HCT116 (cell line): ENCODE measurements at regions of chr6 and their contacts with region 1.

Region 1: GRCh38 chr6:28725890-28726348 is 197.9 kb downstream of the TRIM27 start:
- DNase-seq: no peak
- ATAC-seq: peak; percentile 71
- H3K4me3 ChIP-seq: peak overlapping the region; percentile 28 to 36
- H3K27ac ChIP-seq: no peak overlapping the region
- H3K4me1 ChIP-seq: peaks cover 15 to 31% of the 10 kb centered on the region in 2 experiments; a peak in 3 of 4 replicates
- H3K27me3 ChIP-seq: no peaks in the 10 kb centered on the region
- CTCF ChIP-seq: no peak
- POLR2A ChIP-seq: no peak
- RAD21 ChIP-seq: no peak

Region 2: GRCh38 chr6:27237089-27237803 is 1488.7 kb before region 1 on chr6:
- CTCF ChIA-PET with region 1: no interaction called
- POLR2A ChIA-PET with region 1: no interaction called
- RAD21 ChIA-PET with region 1: no interaction called
- intact Hi-C with region 1: loop called (anchors 10 kb)
- DNase-seq: peak; percentile 67
- ATAC-seq: peak; percentile 86
- H3K4me3 ChIP-seq: no peak overlapping the region
- H3K27ac ChIP-seq: peak overlapping the region; percentile 6; the same call in 1 of the 2 replicates
- H3K4me1 ChIP-seq: peaks cover 8 to 23% of the 10 kb centered on the region in 2 experiments; a peak in 3 of 4 replicates
- H3K27me3 ChIP-seq: no peaks in the 10 kb centered on the region
- CTCF ChIP-seq: no peak
- POLR2A ChIP-seq: no peak
- RAD21 ChIP-seq: no peak

Region 3: GRCh38 chr6:28606424-28607400 is 119.2 kb before region 1 on chr6:
- CTCF ChIA-PET with region 1: no interaction called
- POLR2A ChIA-PET with region 1: no interaction called
- RAD21 ChIA-PET with region 1: no interaction called
- intact Hi-C with region 1: loop called (anchors 5 kb)
- DNase-seq: peak; percentile 87
- ATAC-seq: peak; percentile 88
- H3K4me3 ChIP-seq: peak overlapping the region; percentile 40 to 53
- H3K27ac ChIP-seq: peak overlapping the region; percentile 46
- H3K4me1 ChIP-seq: peaks cover 11 to 39% of the 10 kb centered on the region in 2 experiments; a peak in 3 of 4 replicates
- H3K27me3 ChIP-seq: no peaks in the 10 kb centered on the region
- CTCF ChIP-seq: peak in 2 of 3 experiments; percentile 58 to 59; a peak in 4 of 6 replicates
- POLR2A ChIP-seq: no peak
- RAD21 ChIP-seq: no peak

Region 4: GRCh38 chr6:28789553-28790083 is 63.7 kb after region 1 on chr6:
- CTCF ChIA-PET with region 1: no interaction called
- POLR2A ChIA-PET with region 1: no interaction called
- RAD21 ChIA-PET with region 1: no interaction called
- intact Hi-C with region 1: loop called (anchors 2 kb)
- DNase-seq: peak; percentile 68
- ATAC-seq: peak; percentile 67
- H3K4me3 ChIP-seq: peak overlapping the region; percentile 48 to 55
- H3K27ac ChIP-seq: peak overlapping the region; percentile 5; the same call in 1 of the 2 replicates
- H3K4me1 ChIP-seq: peaks cover 5 to 23% of the 10 kb centered on the region in 2 experiments; a peak in 2 of 4 replicates
- H3K27me3 ChIP-seq: no peaks in the 10 kb centered on the region
- CTCF ChIP-seq: no peak
- POLR2A ChIP-seq: no peak
- RAD21 ChIP-seq: no peak

Region 5: DNA sequence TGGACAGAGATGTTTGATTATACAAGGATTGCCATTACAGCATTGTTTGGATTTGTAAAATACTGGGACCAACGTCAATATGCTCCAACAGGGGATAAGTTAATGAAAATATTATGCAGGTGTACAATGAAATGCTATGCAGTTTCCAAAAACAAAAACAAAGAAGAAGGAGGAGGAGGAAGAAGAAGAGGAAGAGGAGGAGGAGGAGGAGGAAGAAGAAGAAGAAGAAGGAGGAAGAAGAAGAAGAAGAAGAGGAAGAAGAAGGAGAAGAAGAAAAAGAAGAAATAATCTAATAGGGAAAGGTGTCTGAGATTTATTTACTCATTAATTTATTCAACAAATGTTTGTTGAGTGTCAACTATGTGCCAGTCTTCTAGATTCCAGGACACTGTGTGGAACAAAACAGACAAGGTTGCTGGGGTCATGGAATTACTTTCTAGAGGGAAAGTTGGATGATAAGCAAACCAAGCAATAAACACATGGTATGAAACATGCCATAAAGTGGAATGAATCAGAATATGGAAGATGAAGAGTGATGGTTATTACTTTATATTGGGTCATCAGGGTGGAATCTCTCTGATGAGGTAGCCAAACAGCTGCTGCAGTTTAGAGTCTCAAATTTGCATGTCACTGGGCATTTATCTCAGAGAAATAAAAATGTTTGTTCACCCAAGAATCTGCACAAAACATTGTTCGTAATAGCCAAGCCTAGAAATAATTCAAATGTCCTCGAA is 204.1 kb after region 1 on chr6:
- CTCF ChIA-PET with region 1: no interaction called
- POLR2A ChIA-PET with region 1: no interaction called
- RAD21 ChIA-PET with region 1: no interaction called
- intact Hi-C with region 1: no loop called
- DNase-seq: no peak
- ATAC-seq: no peak
- H3K4me3 ChIP-seq: no peak overlapping the region
- H3K27ac ChIP-seq: no peak overlapping the region
- H3K4me1 ChIP-seq: peaks cover under 1 to 13% of the 10 kb centered on the region in 2 experiments; a peak in 3 of 4 replicates
- H3K27me3 ChIP-seq: no peaks in the 10 kb centered on the region
- CTCF ChIP-seq: no peak
- POLR2A ChIP-seq: no peak
- RAD21 ChIP-seq: no peak

Region 6: GRCh38 chr6:28940858-28941680 is 215.2 kb after region 1 on chr6:
- CTCF ChIA-PET with region 1: no interaction called
- POLR2A ChIA-PET with region 1: no interaction called
- RAD21 ChIA-PET with region 1: no interaction called
- intact Hi-C with region 1: loop called (anchors 2 kb)
- DNase-seq: peak; percentile 79
- ATAC-seq: peak; percentile 74
- H3K4me3 ChIP-seq: peak overlapping the region; percentile 42 to 65
- H3K27ac ChIP-seq: peak overlapping the region; percentile 51
- H3K4me1 ChIP-seq: peaks cover 11 to 43% of the 10 kb centered on the region in 2 experiments; a peak in 3 of 4 replicates
- H3K27me3 ChIP-seq: no peaks in the 10 kb centered on the region
- CTCF ChIP-seq: 0 out of 6 replicates have a peak, but pooled peaks of 1 of the 3 experiments have one; percentile 15
- POLR2A ChIP-seq: peak; percentile 25
- RAD21 ChIP-seq: no peak

Region 7: DNA sequence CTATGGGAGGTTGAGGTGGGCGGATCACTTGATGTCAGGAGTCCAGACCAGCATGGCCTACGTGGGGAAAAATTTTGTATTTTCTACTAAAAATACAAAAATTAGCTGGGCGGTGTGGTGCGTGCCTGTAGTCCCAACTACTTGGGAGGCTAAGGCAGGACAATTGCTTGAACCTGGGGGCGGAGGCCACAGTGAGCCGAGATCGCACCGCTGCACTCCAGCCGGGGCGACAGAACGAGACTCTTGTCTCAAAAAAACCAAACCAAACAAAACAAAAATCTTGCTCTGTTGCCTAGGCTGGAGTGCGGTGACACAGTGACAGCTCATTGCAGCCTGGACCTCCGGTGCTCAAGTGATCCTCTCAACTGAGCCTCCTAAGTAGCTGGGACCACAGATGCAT is 302.9 kb after region 1 on chr6:
- CTCF ChIA-PET with region 1: no interaction called
- POLR2A ChIA-PET with region 1: no interaction called
- RAD21 ChIA-PET with region 1: no interaction called
- intact Hi-C with region 1: no loop called
- DNase-seq: no peak
- ATAC-seq: no peak
- H3K4me3 ChIP-seq: no peak overlapping the region
- H3K27ac ChIP-seq: no peak overlapping the region
- H3K4me1 ChIP-seq: no peaks in the 10 kb centered on the region
- H3K27me3 ChIP-seq: no peaks in the 10 kb centered on the region
- CTCF ChIP-seq: no peak
- POLR2A ChIP-seq: no peak
- RAD21 ChIP-seq: no peak